ENCODE measurements at regions of chr1 and their contacts with region 1.

Region 1: GRCh38 chr1:26541816-26542711 is 12.5 kb downstream of the RPS6KA1 start:
- DNase-seq: peak; percentile 45 to 90 (median 76)
- ATAC-seq: peak; percentile 71
- H3K4me3 ChIP-seq: peak overlapping the region; percentile 32 to 36
- H3K4me3 Mint-ChIP-seq: peak overlapping the region; percentile 81
- H3K27ac ChIP-seq: peak overlapping the region; percentile 56 to 85
- H3K27ac Mint-ChIP-seq: peak overlapping the region; percentile 97
- H3K4me1 ChIP-seq: peaks cover 87% of the 10 kb centered on the region
- H3K4me1 Mint-ChIP-seq: peaks cover 88% of the 10 kb centered on the region
- H3K27me3 ChIP-seq: no peaks in the 10 kb centered on the region
- H3K27me3 Mint-ChIP-seq: no peaks in the 10 kb centered on the region
- CTCF ChIP-seq: peak; percentile 65

Region 2: DNA sequence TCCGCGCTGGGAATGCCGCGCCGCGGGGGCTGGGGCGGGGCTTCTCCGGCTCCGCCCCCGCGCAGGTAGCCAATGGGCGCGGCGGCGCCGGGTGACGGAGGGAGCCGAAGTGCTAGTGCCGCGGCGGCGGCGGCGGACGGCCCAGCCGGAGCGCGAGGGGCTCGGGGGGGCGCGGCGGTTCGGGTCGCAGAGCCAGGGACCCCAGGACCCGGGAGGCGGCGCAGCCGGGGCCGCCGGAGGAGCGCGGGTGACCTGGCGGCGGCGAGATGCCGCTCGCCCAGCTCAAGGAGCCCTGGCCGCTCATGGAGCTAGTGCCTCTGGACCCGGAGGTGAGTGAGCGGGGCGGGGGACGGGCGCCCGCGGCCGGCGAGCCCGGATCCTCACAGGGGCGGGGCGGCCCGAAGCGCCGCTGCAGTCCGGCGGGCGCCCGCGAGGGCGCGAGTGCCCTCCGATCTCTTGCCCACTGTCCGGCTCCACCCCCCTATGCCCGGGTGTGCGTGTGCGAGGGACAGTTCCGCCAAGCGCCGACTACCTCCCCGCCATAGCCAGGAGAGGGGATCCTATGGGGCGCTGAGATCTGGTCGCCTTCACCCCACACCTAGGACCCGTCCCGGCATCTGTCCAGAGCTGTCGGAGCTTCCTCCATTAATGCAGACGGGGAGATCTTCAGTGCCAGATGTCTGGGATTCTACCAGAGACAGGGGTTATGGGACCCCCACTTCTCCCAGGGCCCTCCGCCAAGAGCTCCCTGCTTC is 12.2 kb before region 1 on chr1 and contains the start of gene RPS6KA1:
- CTCF ChIA-PET with region 1: interaction called, 37 read pairs
- POLR2A ChIA-PET with region 1: interaction called, 7 read pairs
- intact Hi-C with region 1: loop called (anchors 1 to 2 kb)
- DNase-seq: peak in 8 of 9 experiments; percentile 45 to 83 (median 60)
- ATAC-seq: peak; percentile 94
- H3K4me3 ChIP-seq: peak within 1 kb of the TSS; percentile 60 to 84
- H3K4me3 Mint-ChIP-seq: peak within 1 kb of the TSS; percentile 89
- H3K27ac ChIP-seq: peak within 1 kb of the TSS in 1 of 2 experiments; percentile 37
- H3K27ac Mint-ChIP-seq: peak within 1 kb of the TSS; percentile 89
- H3K4me1 ChIP-seq: peaks cover 30% of the 10 kb centered on the region
- H3K4me1 Mint-ChIP-seq: peaks cover 34% of the 10 kb centered on the region
- H3K27me3 ChIP-seq: no peaks in the 10 kb centered on the region
- H3K27me3 Mint-ChIP-seq: no peaks in the 10 kb centered on the region
- CTCF ChIP-seq: no peak
- total RNA-seq, gene RPS6KA1: 25.8 to 30.3 TPM

Region 3: DNA sequence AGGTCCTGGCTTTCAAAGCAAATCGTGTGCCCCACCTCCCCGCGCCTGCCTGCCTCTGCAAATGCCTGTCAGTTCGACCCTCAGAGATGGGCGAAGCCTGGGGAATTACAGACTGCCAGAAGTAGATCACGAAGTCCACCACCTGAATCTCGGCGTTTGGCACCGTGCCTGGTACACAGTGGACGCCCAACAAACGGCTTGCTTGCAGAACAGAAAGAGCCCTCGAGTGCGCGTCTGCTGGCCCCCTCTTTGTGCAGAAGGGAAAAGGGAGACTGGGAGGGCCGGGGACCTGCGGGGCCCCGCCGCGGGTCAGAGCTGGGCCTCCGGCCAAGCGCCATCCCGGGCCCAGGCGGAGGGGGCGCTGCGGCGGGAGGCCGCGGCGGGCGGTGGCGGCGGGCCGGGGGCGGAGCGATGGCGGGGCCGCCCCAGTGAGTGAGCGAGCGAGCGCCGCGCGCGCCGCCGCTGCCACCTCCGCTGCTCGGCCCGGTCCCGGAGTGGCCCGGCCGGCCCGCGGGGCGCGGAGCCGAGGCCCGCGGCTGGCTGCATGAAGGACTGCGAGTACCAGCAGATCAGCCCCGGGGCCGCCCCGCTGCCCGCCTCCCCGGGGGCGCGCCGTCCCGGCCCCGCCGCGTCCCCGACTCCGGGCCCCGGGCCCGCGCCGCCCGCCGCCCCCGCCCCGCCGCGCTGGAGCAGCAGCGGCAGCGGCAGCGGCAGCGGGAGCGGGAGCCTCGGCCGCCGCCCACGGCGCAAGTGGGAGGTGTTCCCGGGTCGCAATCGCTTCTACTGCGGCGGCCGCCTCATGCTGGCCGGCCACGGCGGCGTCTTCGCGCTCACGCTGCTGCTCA is 284.4 kb after region 1 on chr1 and contains the start of gene ZDHHC18:
- CTCF ChIA-PET with region 1: no interaction called
- POLR2A ChIA-PET with region 1: interaction called, 3 read pairs
- intact Hi-C with region 1: loop called in 1 of 2 experiments (anchors 5 kb)
- DNase-seq: peak; percentile 48 to 86 (median 69)
- ATAC-seq: peak; percentile 89
- H3K4me3 ChIP-seq: peak within 1 kb of the TSS; percentile 68 to 91
- H3K4me3 Mint-ChIP-seq: peak within 1 kb of the TSS; percentile 94
- H3K27ac ChIP-seq: peak within 1 kb of the TSS; percentile 64 to 91
- H3K27ac Mint-ChIP-seq: peak within 1 kb of the TSS; percentile 96
- H3K4me1 ChIP-seq: peaks cover 50% of the 10 kb centered on the region
- H3K4me1 Mint-ChIP-seq: peaks cover 63% of the 10 kb centered on the region
- H3K27me3 ChIP-seq: no peaks in the 10 kb centered on the region
- H3K27me3 Mint-ChIP-seq: no peaks in the 10 kb centered on the region
- CTCF ChIP-seq: peak; percentile 50
- total RNA-seq, gene ZDHHC18: 55.2 to 55.4 TPM

Measured in CD8-positive, alpha-beta T cell (primary cell).